CD14-positive monocyte (primary cell): ENCODE measurements at regions of chr12 and their contacts with region 1.

Region 1: GRCh38 chr12:132083941-132084620 is 60.0 kb downstream of the DDX51 start:
- DNase-seq: peak; percentile 87 to 91 (median 90)
- H3K4me3 ChIP-seq: peak overlapping the region; percentile 58 to 82 (median 77)
- H3K4me3 Mint-ChIP-seq: peak overlapping the region; percentile 67 to 90
- H3K27ac ChIP-seq: peak overlapping the region; percentile 29 to 87
- H3K27ac Mint-ChIP-seq: peak overlapping the region in 6 of 7 donors; percentile 24 to 89 (median 72)
- H3K4me1 ChIP-seq: peaks cover 14 to 15% of the 10 kb centered on the region in 2 donors
- H3K4me1 Mint-ChIP-seq: peaks cover 18% of the 10 kb centered on the region
- H3K27me3 ChIP-seq: no peaks in the 10 kb centered on the region
- H3K27me3 Mint-ChIP-seq: peaks cover 0 to 2% (median 0%) of the 10 kb centered on the region in 3 donors
- CTCF ChIP-seq: no peak

Region 2: DNA sequence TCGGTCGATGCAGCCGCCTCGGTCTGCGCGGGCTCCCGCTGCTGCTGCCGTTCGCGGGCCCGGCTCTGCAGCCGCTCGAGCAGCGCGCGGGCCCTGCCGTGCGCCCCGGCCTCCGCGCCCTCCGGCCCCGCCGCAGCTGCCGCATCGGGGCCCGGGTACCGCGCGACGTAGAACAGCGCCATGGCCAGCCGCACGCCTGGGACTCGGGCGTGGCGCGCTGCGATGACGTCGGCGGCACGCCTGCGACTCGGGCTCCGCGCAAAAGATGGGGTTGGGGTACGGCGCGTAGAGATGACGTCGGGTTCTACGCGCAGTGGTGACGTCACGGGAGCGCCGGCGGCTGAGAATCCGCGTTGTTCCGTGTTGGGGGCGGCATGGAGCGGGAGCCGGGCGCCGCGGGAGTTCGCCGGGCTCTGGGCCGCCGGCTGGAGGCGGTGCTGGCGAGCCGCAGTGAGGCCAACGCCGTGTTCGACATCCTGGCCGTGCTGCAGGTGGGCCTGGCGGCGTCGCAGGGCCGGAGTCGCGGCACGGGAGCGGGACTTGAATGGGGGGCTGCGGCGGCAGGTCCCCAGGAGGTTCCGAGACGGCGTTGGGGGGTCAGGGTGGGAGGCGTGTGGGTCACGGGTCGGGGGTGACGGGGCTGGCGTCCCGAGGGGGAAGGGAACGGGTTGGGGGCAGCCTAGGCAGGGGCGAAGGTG is 60.2 kb after region 1 on chr12 and contains the starts of genes DDX51 and NOC4L:
- intact Hi-C with region 1: loop called (anchors 2 to 5 kb)
- DNase-seq: peak; percentile 92 to 97 (median 97)
- H3K4me3 ChIP-seq: peak within 1 kb of the TSS; percentile 81 to 93 (median 88)
- H3K4me3 Mint-ChIP-seq: peak within 1 kb of the TSS; percentile 82 to 89
- H3K27ac ChIP-seq: peak within 1 kb of the TSS; percentile 17 to 92
- H3K27ac Mint-ChIP-seq: peak within 1 kb of the TSS; percentile 75 to 94 (median 87)
- H3K4me1 ChIP-seq: peaks cover 16 to 24% of the 10 kb centered on the region in 2 donors
- H3K4me1 Mint-ChIP-seq: peaks cover 21% of the 10 kb centered on the region
- H3K27me3 ChIP-seq: no peaks in the 10 kb centered on the region
- H3K27me3 Mint-ChIP-seq: peaks cover 0 to 3% (median 0%) of the 10 kb centered on the region in 3 donors
- CTCF ChIP-seq: no peak
- polyA plus RNA-seq, gene DDX51: 1.7 to 24.9 (median 2.7) TPM
- polyA plus RNA-seq, gene NOC4L: 7.3 to 18.0 (median 17.9) TPM

Region 3: DNA sequence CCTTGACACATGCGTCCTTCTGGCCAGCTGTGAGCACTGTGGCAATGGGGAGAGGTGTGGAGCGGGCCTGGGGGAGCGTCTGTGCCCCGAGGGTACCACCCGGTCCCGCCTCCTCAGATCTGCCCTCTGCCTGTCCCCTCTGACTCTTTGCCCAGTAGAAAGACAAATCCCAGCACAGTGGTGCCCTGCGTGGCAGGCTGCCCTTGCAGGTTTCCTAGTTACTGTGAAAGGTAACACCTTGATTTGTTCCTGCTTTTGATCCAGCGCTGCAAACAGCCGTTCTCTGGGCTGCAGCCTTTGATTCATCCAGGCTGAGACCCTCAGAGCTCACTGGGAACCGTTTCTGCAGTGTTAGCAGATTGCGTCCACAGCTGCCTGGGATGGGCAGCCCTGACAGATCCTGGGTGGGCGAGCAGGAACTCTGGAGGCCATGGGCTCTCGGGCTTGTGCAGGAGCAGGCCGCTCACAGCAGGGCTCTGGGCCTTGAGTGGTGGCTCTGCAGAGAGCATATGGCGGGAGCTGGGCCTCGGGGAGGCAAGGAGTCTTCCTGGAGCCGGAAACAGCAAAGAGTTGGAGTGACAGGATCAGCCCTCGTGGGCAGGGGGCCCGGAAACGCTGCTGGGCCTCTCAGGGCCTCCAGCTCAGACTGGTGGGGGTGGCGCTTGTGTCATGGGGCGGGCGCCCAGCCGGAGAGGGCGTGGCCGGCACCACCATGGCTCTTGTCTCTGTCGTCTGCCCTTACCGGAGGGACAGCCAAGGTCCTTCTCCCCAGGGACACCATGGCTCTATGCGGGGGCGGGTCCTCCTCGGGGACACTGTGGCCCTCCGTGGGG is 422.5 kb after region 1 on chr12:
- intact Hi-C with region 1: loop called in 1 of 2 experiments (anchors 10 kb)
- DNase-seq: peak; percentile 29 to 49 (median 42)
- H3K4me3 ChIP-seq: peak overlapping the region in 1 of 3 experiments; percentile 61
- H3K4me3 Mint-ChIP-seq: peak overlapping the region; percentile 61 to 83
- H3K27ac ChIP-seq: peak overlapping the region in 1 of 2 donors; percentile 70
- H3K27ac Mint-ChIP-seq: peak overlapping the region in 6 of 7 donors; percentile 15 to 80 (median 58)
- H3K4me1 ChIP-seq: peaks cover 49 to 58% of the 10 kb centered on the region in 2 donors
- H3K4me1 Mint-ChIP-seq: peaks cover 53% of the 10 kb centered on the region
- H3K27me3 ChIP-seq: no peaks in the 10 kb centered on the region
- H3K27me3 Mint-ChIP-seq: peaks cover 0 to 28% (median 0%) of the 10 kb centered on the region in 3 donors
- CTCF ChIP-seq: no peak